GM12878 (cell line): ENCODE measurements at regions of chr11 and their contacts with region 1.

Region 1: GRCh38 chr11:88543902-88544655 is 206.5 kb upstream of the CTSC start:
- DNase-seq: peak; percentile 73
- ATAC-seq: peak; percentile 100
- H3K4me3 ChIP-seq: no peak overlapping the region
- H3K27ac ChIP-seq: peak overlapping the region; percentile 45
- H3K4me1 ChIP-seq: no peaks in the 10 kb centered on the region
- H3K27me3 ChIP-seq: no peaks in the 10 kb centered on the region
- CTCF ChIP-seq: peak; percentile 94 to 100 (median 99); a peak in 5 of 6 replicates
- EP300 ChIP-seq: no peak
- POLR2A ChIP-seq: no peak
- RAD21 ChIP-seq: peak; percentile 100

Region 2: DNA sequence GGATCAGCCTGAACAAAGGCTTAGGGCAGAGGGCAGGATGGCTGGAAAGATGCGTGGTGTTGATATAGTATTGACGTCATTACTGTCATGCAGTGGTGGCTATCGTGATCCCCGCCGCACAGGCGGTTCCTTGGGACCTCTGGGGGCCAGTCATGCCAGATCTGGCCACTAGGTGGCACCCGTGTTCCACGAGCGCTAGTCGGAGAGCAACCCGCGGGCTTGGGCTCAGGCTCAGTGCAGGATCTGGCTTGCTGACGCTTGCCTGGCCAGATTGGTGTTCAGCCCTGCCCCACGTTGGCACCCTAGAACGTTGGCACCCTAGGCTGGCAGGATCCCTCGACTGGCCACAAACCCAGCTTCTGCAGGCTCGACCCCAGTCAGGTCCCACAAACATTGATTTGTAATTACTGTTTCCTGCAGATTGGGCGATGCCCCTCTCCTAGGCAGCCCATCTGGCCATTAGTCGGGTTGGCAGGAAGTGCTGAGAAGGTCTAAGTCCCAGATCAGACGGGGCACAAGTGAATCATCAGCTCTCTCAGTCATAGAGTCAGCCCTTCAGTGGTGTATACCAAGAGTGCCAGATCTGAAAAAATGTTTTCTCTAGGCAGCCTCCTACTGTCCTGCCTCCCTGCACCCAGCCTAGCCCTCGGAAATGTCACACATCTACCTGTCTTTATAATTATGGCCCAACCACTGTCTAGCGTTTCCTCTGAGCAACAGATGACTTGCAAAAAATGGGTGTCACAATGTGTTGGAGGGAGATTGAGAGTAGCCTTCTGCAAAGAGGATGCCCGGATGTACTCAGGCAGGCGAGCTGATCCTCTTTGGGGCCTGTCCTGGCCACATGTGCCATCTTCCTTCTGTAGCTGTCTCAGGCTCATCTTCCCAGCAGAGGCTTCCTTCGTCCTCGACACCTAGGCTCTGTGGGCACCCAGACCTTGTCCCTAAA is 1191.0 kb before region 1 on chr11:
- CTCF ChIA-PET with region 1: no interaction called
- POLR2A ChIA-PET with region 1: no interaction called
- RAD21 ChIA-PET with region 1: no interaction called
- SMC1A ChIA-PET with region 1: no interaction called
- in situ Hi-C with region 1: loop called (anchors 5 kb)
- intact Hi-C with region 1: no loop called
- DNase-seq: no peak
- ATAC-seq: peak; percentile 98
- H3K4me3 ChIP-seq: no peak overlapping the region
- H3K27ac ChIP-seq: no peak overlapping the region
- H3K4me1 ChIP-seq: no peaks in the 10 kb centered on the region
- H3K27me3 ChIP-seq: no peaks in the 10 kb centered on the region
- CTCF ChIP-seq: peak; percentile 97 to 98 (median 98); a peak in 5 of 6 replicates
- EP300 ChIP-seq: no peak
- POLR2A ChIP-seq: no peak
- RAD21 ChIP-seq: peak; percentile 90

Region 3: GRCh38 chr11:87878373-87878779 is 665.7 kb before region 1 on chr11:
- CTCF ChIA-PET with region 1: interaction called, 12 read pairs
- POLR2A ChIA-PET with region 1: interaction called, 4 read pairs
- RAD21 ChIA-PET with region 1: interaction called, 5 read pairs
- SMC1A ChIA-PET with region 1: interaction called, 4 read pairs
- in situ Hi-C with region 1: no loop called
- intact Hi-C with region 1: loop called (anchors 1 kb)
- DNase-seq: no peak
- ATAC-seq: peak; percentile 49; the same call in 1 of the 3 replicates
- H3K4me3 ChIP-seq: no peak overlapping the region
- H3K27ac ChIP-seq: no peak overlapping the region
- H3K4me1 ChIP-seq: no peaks in the 10 kb centered on the region
- H3K27me3 ChIP-seq: no peaks in the 10 kb centered on the region
- CTCF ChIP-seq: peak; percentile 34 to 35 (median 34); a peak in 3 of 6 replicates
- EP300 ChIP-seq: no peak
- POLR2A ChIP-seq: no peak
- RAD21 ChIP-seq: peak; percentile 40

Region 4: GRCh38 chr11:88164320-88164719 is 379.8 kb before region 1 on chr11:
- CTCF ChIA-PET with region 1: interaction called, 12 read pairs
- POLR2A ChIA-PET with region 1: no interaction called
- RAD21 ChIA-PET with region 1: no interaction called
- SMC1A ChIA-PET with region 1: interaction called, 16 read pairs
- in situ Hi-C with region 1: no loop called
- intact Hi-C with region 1: loop called (anchors 2 kb)
- DNase-seq: peak; percentile 32
- ATAC-seq: peak; percentile 91
- H3K4me3 ChIP-seq: no peak overlapping the region
- H3K27ac ChIP-seq: no peak overlapping the region
- H3K4me1 ChIP-seq: peaks cover 3% of the 10 kb centered on the region
- H3K27me3 ChIP-seq: no peaks in the 10 kb centered on the region
- CTCF ChIP-seq: no peak
- EP300 ChIP-seq: peak in 1 of 2 experiments; percentile 30; a peak in 1 of 4 replicates
- POLR2A ChIP-seq: no peak
- RAD21 ChIP-seq: no peak

Region 5: DNA sequence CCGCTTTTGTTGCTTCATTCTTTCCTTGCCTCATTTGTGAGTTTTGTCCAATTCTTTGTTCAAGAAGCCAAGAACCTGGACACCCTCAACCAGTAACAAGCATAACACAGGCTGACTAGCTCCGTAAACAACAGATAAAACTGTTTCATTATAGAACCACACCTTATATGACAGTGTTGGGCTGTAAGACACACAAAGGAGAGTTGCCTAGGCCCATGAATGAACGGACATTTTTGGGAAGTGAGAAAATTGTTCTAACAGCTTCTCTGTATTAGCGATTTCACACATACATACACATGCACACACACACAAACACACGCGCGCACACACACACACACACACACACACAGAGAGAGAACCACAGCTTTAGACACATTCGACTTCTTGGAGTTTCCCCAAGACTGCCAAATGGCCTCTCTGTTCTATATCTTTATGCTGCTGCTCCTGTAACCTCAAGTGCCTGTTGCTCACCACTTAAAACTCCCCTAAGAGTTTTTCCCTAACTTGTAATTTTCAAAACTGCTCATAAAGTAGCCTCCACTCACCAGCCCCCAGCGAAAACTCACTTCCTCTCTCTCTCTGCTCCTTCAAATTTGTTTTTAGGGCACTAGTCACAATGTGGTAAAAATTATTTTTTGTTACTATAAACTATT is 242.5 kb before region 1 on chr11:
- CTCF ChIA-PET with region 1: no interaction called
- POLR2A ChIA-PET with region 1: no interaction called
- RAD21 ChIA-PET with region 1: no interaction called
- SMC1A ChIA-PET with region 1: interaction called, 3 read pairs
- in situ Hi-C with region 1: no loop called
- intact Hi-C with region 1: loop called (anchors 5 kb)
- DNase-seq: peak; percentile 85
- ATAC-seq: peak; percentile 80
- H3K4me3 ChIP-seq: peak overlapping the region; percentile 43
- H3K27ac ChIP-seq: peak overlapping the region; percentile 83
- H3K4me1 ChIP-seq: peaks cover 48% of the 10 kb centered on the region
- H3K27me3 ChIP-seq: no peaks in the 10 kb centered on the region
- CTCF ChIP-seq: no peak
- EP300 ChIP-seq: peak; percentile 86 to 95; a peak in 3 of 4 replicates
- POLR2A ChIP-seq: no peak
- RAD21 ChIP-seq: no peak

Region 6: DNA sequence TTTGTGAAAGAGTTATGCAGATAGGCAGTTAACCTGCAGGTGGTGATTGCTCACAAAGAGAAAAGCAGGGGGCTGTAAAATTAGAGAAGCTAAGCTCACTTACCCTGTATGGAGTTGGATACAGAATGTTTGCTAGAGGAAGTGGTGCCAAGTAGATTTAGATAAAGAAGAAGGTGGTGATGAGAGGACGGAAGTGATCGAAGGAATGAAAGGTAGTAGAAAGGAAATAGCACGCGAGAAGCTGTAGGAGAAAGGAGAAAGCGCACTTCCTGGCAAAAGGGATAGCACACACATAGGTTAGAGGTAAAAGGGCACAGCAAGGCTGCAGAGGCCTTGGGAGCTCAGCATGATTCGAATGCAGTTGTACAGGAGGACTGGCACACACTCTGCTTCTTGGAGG is 119.2 kb before region 1 on chr11:
- CTCF ChIA-PET with region 1: no interaction called
- POLR2A ChIA-PET with region 1: no interaction called
- RAD21 ChIA-PET with region 1: no interaction called
- SMC1A ChIA-PET with region 1: no interaction called
- in situ Hi-C with region 1: no loop called
- intact Hi-C with region 1: no loop called
- DNase-seq: no peak
- ATAC-seq: no peak
- H3K4me3 ChIP-seq: no peak overlapping the region
- H3K27ac ChIP-seq: no peak overlapping the region
- H3K4me1 ChIP-seq: peaks cover 11% of the 10 kb centered on the region; the same call in 1 of the 2 replicates
- H3K27me3 ChIP-seq: no peaks in the 10 kb centered on the region
- CTCF ChIP-seq: no peak
- EP300 ChIP-seq: no peak
- POLR2A ChIP-seq: no peak
- RAD21 ChIP-seq: no peak

Region 7: GRCh38 chr11:88484873-88485621 is 59.0 kb before region 1 on chr11:
- CTCF ChIA-PET with region 1: interaction called, 4 read pairs
- POLR2A ChIA-PET with region 1: no interaction called
- RAD21 ChIA-PET with region 1: no interaction called
- SMC1A ChIA-PET with region 1: interaction called, 5 read pairs
- in situ Hi-C with region 1: no loop called
- intact Hi-C with region 1: loop called (anchors 2 kb)
- DNase-seq: peak; percentile 27
- ATAC-seq: peak; percentile 94
- H3K4me3 ChIP-seq: no peak overlapping the region
- H3K27ac ChIP-seq: no peak overlapping the region
- H3K4me1 ChIP-seq: peaks cover 8% of the 10 kb centered on the region
- H3K27me3 ChIP-seq: no peaks in the 10 kb centered on the region
- CTCF ChIP-seq: peak; percentile 63 to 87 (median 79)
- EP300 ChIP-seq: no peak
- POLR2A ChIP-seq: no peak
- RAD21 ChIP-seq: peak; percentile 61